T-cell (primary cell): ENCODE measurements at regions of chr6 and their contacts with region 1.

Region 1: DNA sequence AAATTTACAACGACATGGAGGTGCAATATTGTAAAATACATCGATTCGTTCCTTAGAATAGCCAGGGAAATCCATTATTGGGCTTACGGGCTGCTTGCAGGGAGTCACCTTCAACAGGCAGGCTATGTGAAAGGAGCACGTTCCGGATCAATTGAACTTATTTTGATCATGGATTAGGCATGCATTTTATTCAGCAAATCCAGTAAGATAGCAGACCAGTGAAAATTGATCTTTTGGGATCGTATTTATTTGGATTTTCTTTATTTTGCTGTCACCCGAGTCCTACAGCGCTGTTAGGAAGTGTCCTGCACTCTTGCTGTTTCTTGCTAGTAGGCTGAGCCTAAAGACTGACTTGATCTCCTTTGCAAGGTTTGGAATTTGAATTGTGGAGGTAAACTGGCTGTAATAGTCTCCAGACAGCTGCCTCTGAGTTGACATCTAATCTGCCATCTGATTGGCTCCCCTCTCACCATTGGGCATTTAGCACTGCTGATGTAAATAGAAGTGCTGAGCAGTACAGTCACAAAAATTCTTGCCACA is 3.0 kb downstream of the ARID1B start:
- DNase-seq: peak in 34 of 35 experiments; percentile 4 to 84 (median 48)
- ATAC-seq: peak; percentile 16 to 59 (median 32)
- H3K4me3 ChIP-seq: peak overlapping the region; percentile 73 to 90
- H3K4me3 Mint-ChIP-seq: peak overlapping the region; percentile 77 to 95 (median 88)
- H3K27ac ChIP-seq: peak overlapping the region; percentile 73
- H3K27ac Mint-ChIP-seq: peak overlapping the region; percentile 80 to 84
- H3K4me1 ChIP-seq: peaks cover 9 to 51% of the 10 kb centered on the region in 2 experiments
- H3K4me1 Mint-ChIP-seq: peaks cover 51 to 56% (median 53%) of the 10 kb centered on the region in 3 donors
- H3K27me3 ChIP-seq: no peaks in the 10 kb centered on the region
- H3K27me3 Mint-ChIP-seq: no peaks in the 10 kb centered on the region

Region 2: DNA sequence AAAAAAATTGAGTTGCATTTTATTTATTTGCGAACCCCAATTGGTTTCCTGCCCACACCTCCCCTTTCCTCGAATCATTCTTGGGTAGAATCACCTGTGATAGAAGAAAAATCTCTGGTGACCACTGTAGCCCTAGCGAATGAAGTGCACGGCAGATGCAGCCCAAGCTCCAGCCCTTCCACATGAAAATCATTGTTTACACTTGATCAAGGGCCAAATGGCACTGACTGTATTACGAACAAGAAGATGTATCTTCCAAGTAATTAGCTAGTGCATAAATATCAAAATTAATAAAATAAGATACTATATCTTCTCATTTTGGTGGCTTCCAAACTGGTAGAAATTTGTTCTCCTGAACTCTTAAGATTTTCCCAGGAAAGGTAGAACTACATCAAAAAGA is 96.4 kb before region 1 on chr6:
- CTCF ChIA-PET with region 1: interaction called, 3 to 7 read pairs
- POLR2A ChIA-PET with region 1: interaction called in 1 of 2 experiments, 11 read pairs
- DNase-seq: no peak
- ATAC-seq: no peak
- H3K4me3 ChIP-seq: no peak overlapping the region
- H3K4me3 Mint-ChIP-seq: no peak overlapping the region
- H3K27ac ChIP-seq: no peak overlapping the region
- H3K27ac Mint-ChIP-seq: no peak overlapping the region
- H3K4me1 ChIP-seq: peaks cover 10 to 13% of the 10 kb centered on the region in 2 experiments
- H3K4me1 Mint-ChIP-seq: peaks cover 19 to 22% (median 22%) of the 10 kb centered on the region in 3 donors
- H3K27me3 ChIP-seq: no peaks in the 10 kb centered on the region
- H3K27me3 Mint-ChIP-seq: no peaks in the 10 kb centered on the region

Region 3: DNA sequence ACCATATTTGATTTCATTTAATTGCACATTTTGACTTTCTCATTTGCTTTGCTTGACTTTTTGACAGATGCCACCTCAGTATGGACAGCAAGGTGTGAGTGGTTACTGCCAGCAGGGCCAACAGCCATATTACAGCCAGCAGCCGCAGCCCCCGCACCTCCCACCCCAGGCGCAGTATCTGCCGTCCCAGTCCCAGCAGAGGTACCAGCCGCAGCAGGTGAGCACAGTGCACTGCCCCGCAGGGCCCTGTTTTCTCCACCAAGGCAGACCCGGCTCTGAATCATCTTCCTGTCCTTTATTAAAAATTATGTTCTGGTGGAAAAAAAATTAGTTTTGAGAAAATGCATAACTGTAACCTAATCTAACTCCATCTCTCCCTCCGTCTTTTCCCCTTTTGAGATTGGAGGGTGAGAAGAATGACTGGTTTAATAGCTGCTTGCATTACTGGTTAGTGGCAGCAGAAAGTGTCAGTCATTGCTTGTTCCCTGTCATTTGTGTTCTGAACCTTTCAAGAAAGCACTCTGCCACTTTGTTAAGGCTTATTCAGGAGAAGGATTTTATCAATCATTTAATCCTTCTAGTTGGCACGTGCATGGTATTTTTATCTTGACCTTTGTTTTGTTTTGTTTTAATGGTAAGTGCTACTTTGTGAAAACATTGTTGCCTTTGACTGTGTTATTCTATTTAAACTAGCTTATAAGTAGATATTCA is 121.3 kb after region 1 on chr6:
- CTCF ChIA-PET with region 1: no interaction called
- POLR2A ChIA-PET with region 1: no interaction called
- DNase-seq: no peak
- ATAC-seq: no peak
- H3K4me3 ChIP-seq: no peak overlapping the region
- H3K4me3 Mint-ChIP-seq: no peak overlapping the region
- H3K27ac ChIP-seq: no peak overlapping the region
- H3K27ac Mint-ChIP-seq: peak overlapping the region in 1 of 2 donors; percentile 62
- H3K4me1 ChIP-seq: peaks cover 16% of the 10 kb centered on the region in 2 experiments
- H3K4me1 Mint-ChIP-seq: peaks cover 63 to 72% (median 69%) of the 10 kb centered on the region in 3 donors
- H3K27me3 ChIP-seq: no peaks in the 10 kb centered on the region
- H3K27me3 Mint-ChIP-seq: no peaks in the 10 kb centered on the region

Region 4: GRCh38 chr6:157098999-157099398 is 318.8 kb after region 1 on chr6:
- CTCF ChIA-PET with region 1: interaction called in 1 of 2 experiments, 10 read pairs
- POLR2A ChIA-PET with region 1: no interaction called
- DNase-seq: no peak
- ATAC-seq: no peak
- H3K4me3 ChIP-seq: no peak overlapping the region
- H3K4me3 Mint-ChIP-seq: no peak overlapping the region
- H3K27ac ChIP-seq: no peak overlapping the region
- H3K27ac Mint-ChIP-seq: peak overlapping the region; percentile 93 to 94
- H3K4me1 ChIP-seq: peaks cover 19% of the 10 kb centered on the region in 2 experiments
- H3K4me1 Mint-ChIP-seq: peaks cover 50 to 69% (median 68%) of the 10 kb centered on the region in 3 donors
- H3K27me3 ChIP-seq: no peaks in the 10 kb centered on the region
- H3K27me3 Mint-ChIP-seq: no peaks in the 10 kb centered on the region